ENCODE measurements at regions of chr2 and their contacts with region 1.

Region 1: DNA sequence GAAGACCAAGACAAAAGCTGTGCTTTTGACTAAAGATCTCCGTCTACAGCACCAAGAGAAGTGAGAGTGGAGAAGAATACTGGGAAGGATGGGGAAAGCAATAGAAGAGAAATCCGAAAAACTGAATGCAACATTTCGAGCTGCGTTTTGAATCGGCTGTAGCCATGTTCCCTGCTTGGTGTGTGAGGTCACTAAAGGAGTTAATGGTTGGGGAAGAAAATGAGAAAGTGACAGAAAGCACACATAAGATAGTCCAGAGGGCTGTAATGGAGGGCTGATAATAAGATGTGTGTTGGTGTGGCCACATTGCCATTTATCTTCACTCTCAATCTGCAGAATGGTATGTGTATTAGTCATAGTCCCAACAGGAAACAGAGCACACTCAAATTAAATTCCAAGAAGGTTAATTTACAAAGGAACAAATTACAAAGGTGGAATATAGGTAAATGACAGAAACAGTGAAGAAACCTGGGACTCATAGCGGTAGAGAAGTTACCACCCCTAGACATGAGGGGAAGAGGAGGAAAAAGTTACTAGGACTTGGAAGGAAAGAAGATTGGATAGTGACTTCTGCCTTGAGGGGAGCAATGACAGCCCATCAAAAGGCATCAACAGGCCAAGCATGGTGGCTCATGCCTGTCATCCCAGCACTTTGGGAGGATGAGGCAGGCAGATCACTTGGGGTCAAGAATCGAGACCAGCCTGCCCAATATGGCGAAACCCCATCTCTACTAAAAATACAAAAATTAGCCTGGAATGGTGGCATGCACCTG is 2.3 kb upstream of the PDE11A start:
- DNase-seq: no peak
- ATAC-seq: no peak
- H3K4me3 ChIP-seq: no peak overlapping the region
- H3K27ac ChIP-seq: no peak overlapping the region
- H3K4me1 ChIP-seq: peaks cover 5% of the 10 kb centered on the region; the same call in 1 of the 2 replicates
- H3K27me3 ChIP-seq: peaks cover 12% of the 10 kb centered on the region
- CTCF ChIP-seq: no peak

Region 2: GRCh38 chr2:177195194-177195593 is 879.6 kb before region 1 on chr2:
- CTCF ChIA-PET with region 1: interaction called, 10 read pairs
- POLR2A ChIA-PET with region 1: no interaction called
- in situ Hi-C with region 1: no loop called
- intact Hi-C with region 1: no loop called
- DNase-seq: no peak
- ATAC-seq: no peak; the same call in 1 of the 2 replicates
- H3K4me3 ChIP-seq: no peak overlapping the region
- H3K27ac ChIP-seq: no peak overlapping the region
- H3K4me1 ChIP-seq: no peaks in the 10 kb centered on the region; the same call in 1 of the 2 replicates
- H3K27me3 ChIP-seq: no peaks in the 10 kb centered on the region
- CTCF ChIP-seq: peak; percentile 28; the same call in 1 of the 2 replicates

Region 3: GRCh38 chr2:178043266-178043665 is 31.6 kb before region 1 on chr2:
- CTCF ChIA-PET with region 1: no interaction called
- POLR2A ChIA-PET with region 1: no interaction called
- in situ Hi-C with region 1: no loop called
- intact Hi-C with region 1: no loop called
- DNase-seq: no peak
- ATAC-seq: no peak
- H3K4me3 ChIP-seq: no peak overlapping the region
- H3K27ac ChIP-seq: no peak overlapping the region
- H3K4me1 ChIP-seq: no peaks in the 10 kb centered on the region
- H3K27me3 ChIP-seq: no peaks in the 10 kb centered on the region; the same call in 1 of the 2 replicates
- CTCF ChIP-seq: no peak